ENCODE measurements at regions of chr15 and their contacts with region 1.

Region 1: DNA sequence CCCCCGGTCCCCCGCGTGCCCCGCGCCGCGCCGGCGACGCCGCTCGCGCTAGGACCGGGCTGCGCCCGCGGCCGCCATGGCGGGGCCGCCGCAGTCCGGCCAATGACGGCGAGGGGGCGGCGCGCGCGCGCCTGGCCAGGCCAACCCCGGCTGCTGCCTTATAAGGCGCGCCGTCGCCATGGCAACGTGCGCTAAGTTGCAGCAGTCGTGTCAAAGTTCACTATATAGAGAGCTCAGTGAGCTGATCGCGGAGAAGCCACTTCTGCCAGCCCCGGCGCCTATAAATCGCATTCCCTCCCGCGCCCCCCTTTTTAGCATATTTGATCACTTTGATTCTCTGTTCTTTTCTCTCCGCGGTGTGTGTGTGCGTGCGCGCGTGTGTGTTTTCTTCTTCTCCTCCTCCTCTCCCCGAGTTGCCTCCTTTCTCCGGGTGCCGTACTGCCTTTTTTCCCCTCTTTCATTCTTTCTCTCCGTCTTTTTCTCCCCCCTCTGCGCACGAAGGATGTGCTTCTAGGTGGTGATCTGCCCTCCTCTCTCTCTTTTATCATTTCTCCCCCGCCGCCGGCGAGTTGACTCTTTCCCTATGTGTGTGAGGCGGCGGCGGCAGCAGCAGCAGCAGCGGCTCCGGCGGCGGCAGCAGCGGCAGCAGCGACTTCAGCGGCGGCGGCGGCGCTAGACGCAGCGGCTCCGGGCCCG is at the start of gene NR2F2:
- DNase-seq: peak; percentile 99
- ATAC-seq: peak; percentile 78
- H3K4me3 ChIP-seq: peak within 1 kb of the TSS; percentile 84
- H3K27ac ChIP-seq: peak within 1 kb of the TSS; percentile 98
- H3K4me1 ChIP-seq: peaks cover 3% of the 10 kb centered on the region
- H3K27me3 ChIP-seq: no peaks in the 10 kb centered on the region
- CTCF ChIP-seq: no peak
- POLR2A ChIP-seq: peak; percentile 88
- RAD21 ChIP-seq: no peak; the same call in 1 of the 2 replicates
- total RNA-seq, gene NR2F2: 20.3 and 28.1 TPM in 2 replicates

Region 2: GRCh38 chr15:95025924-95026728 is 1304.5 kb before region 1 on chr15:
- CTCF ChIA-PET with region 1: no interaction called
- POLR2A ChIA-PET with region 1: no interaction called
- dilution Hi-C with region 1: no loop called
- in situ Hi-C with region 1: no loop called
- intact Hi-C with region 1: loop called (anchors 1 kb)
- DNase-seq: peak; percentile 61
- ATAC-seq: peak; percentile 93
- H3K4me3 ChIP-seq: no peak overlapping the region
- H3K27ac ChIP-seq: no peak overlapping the region
- H3K4me1 ChIP-seq: no peaks in the 10 kb centered on the region
- H3K27me3 ChIP-seq: peaks cover 2% of the 10 kb centered on the region; the same call in 1 of the 2 replicates
- CTCF ChIP-seq: peak; percentile 77
- POLR2A ChIP-seq: no peak
- RAD21 ChIP-seq: peak; percentile 81

Region 3: GRCh38 chr15:95291898-95292472 is 1038.6 kb before region 1 on chr15:
- CTCF ChIA-PET with region 1: no interaction called
- POLR2A ChIA-PET with region 1: interaction called, 3 read pairs
- dilution Hi-C with region 1: no loop called
- in situ Hi-C with region 1: loop called (anchors 10 kb)
- intact Hi-C with region 1: loop called (anchors 1 kb)
- DNase-seq: peak; percentile 56
- ATAC-seq: no peak
- H3K4me3 ChIP-seq: no peak overlapping the region
- H3K27ac ChIP-seq: no peak overlapping the region
- H3K4me1 ChIP-seq: peaks cover 15% of the 10 kb centered on the region
- H3K27me3 ChIP-seq: no peaks in the 10 kb centered on the region
- CTCF ChIP-seq: peak; percentile 59
- POLR2A ChIP-seq: no peak
- RAD21 ChIP-seq: peak; percentile 52

Region 4: DNA sequence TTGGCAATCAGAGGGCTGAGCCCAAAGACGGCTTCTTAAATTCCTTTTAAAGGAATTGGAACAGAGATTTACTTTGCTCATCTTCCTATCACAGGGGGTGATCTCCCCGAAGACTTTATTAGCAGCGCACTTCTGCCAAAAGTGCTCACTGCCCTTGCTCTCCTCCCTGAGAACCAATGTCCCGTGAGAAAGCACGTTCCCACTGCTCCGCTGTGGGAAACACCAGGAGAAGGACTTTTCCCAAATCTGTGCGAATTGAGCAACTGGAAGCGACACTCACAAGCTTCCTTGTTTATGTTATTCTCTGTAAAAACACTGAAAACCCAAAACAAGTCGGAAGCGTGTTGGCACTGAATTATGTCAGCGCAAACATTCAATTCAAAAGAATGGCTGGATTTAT is 670.9 kb before region 1 on chr15:
- CTCF ChIA-PET with region 1: no interaction called
- POLR2A ChIA-PET with region 1: no interaction called
- dilution Hi-C with region 1: no loop called
- in situ Hi-C with region 1: no loop called
- intact Hi-C with region 1: loop called (anchors 10 kb)
- DNase-seq: no peak
- ATAC-seq: no peak
- H3K4me3 ChIP-seq: no peak overlapping the region
- H3K27ac ChIP-seq: no peak overlapping the region
- H3K4me1 ChIP-seq: peaks cover 12% of the 10 kb centered on the region
- H3K27me3 ChIP-seq: no peaks in the 10 kb centered on the region
- CTCF ChIP-seq: no peak
- POLR2A ChIP-seq: no peak
- RAD21 ChIP-seq: no peak

Region 5: DNA sequence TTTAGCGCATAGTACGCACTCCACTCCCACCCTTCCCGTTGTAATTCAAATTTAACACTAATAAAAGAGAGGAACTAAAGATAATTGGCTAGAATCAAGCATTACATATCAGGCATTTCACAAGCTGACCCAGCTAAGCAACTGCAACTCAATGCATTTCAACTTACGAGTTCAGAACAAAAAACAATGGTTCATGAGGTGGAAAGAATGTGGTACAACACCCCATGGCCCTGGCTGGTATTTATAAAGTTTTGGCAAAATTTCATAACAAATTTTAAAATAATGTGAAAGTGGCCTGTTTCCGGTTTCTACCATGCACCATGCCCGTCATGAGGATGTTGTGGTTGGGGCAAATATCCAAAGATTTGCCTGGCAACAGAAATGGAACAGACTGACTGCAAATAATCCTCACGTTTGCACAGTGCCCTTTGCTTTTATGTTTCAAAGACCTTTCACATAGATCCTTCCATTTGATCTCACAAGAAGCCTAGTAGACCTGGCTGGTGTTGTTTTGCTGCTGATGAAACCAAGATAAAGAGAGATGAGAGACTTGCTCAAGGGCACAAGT is 455.4 kb before region 1 on chr15:
- CTCF ChIA-PET with region 1: no interaction called
- POLR2A ChIA-PET with region 1: no interaction called
- dilution Hi-C with region 1: no loop called
- in situ Hi-C with region 1: no loop called
- intact Hi-C with region 1: loop called (anchors 2 kb)
- DNase-seq: no peak
- ATAC-seq: no peak
- H3K4me3 ChIP-seq: no peak overlapping the region
- H3K27ac ChIP-seq: no peak overlapping the region
- H3K4me1 ChIP-seq: peaks cover 3% of the 10 kb centered on the region
- H3K27me3 ChIP-seq: no peaks in the 10 kb centered on the region
- CTCF ChIP-seq: no peak
- POLR2A ChIP-seq: no peak
- RAD21 ChIP-seq: no peak

Region 6: DNA sequence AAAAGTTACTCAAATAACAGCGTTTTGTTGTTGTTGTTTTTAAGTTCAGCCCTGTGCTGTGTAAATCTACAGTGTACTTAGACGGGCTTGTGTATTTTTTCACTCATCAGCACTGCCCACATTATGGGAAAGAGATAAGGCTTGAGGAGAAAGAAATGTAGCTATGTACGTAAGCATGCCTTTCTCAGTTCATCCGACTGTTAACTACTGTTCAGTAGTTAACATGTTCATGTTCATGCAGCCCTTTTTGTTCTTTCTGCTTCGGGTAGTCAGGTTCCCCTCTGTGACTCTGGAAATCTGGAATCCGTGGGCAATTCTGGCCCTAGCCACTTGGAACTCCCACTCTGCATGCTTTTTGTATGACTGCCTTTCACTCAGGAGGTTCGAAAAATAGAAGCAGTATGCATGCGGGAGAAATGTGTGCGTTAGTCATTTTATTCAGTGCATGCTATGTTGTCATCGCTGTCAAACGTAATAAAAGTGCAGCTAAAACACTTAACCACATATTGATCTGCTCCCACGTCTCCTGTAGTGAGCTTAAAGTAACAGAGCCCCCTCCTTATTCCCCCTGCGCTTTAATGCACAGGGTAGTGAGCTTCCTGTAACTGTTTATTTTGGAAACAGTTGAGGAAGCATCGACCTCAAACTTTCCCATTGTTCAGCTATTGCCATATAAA is 283.2 kb before region 1 on chr15:
- CTCF ChIA-PET with region 1: interaction called, 4 read pairs
- POLR2A ChIA-PET with region 1: no interaction called
- dilution Hi-C with region 1: no loop called
- in situ Hi-C with region 1: no loop called
- intact Hi-C with region 1: loop called (anchors 2 kb)
- DNase-seq: peak; percentile 98
- ATAC-seq: peak; percentile 88
- H3K4me3 ChIP-seq: peak overlapping the region; percentile 4; the same call in 1 of the 2 replicates
- H3K27ac ChIP-seq: peak overlapping the region; percentile 13; the same call in 1 of the 2 replicates
- H3K4me1 ChIP-seq: peaks cover 3% of the 10 kb centered on the region
- H3K27me3 ChIP-seq: no peaks in the 10 kb centered on the region
- CTCF ChIP-seq: no peak; the same call in 1 of the 2 replicates
- POLR2A ChIP-seq: peak; percentile 46; the same call in 1 of the 2 replicates
- RAD21 ChIP-seq: peak; percentile 20; the same call in 1 of the 2 replicates

Region 7: DNA sequence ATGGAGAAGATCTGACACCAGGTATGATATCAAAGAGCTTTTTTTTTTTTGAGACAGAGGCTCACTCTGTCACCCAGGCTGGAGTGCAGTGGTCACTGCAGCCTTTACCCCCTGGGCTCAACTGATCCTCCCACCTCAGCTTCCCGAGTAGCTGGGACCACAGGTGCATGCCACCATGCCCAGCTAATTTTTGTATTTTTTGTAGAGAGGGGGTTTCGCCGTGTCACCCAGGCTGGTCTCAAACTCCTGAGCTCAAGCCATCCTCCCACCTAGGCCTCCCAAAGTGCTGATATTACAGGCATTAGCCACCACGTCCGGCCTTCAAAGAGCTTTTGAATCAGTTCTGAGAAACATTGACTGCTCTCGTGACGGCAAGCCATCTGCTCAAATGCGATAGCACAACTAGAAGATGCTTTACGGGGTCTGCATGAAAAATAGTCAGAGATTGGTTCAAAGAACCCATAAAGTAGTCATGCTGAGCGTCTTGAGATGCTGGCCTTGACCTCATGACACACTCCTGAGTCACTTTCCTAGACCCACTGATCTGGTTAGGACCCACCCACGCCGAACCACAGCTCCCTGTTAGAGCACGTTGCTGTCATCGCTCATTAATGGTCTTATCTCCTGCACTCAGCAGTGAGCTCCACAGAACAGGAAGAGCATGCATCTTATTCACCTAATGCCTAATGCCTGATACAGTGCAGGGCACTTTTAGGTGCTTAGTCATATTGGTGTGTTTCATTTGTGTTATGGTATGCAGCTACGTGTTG is 57.1 kb before region 1 on chr15:
- CTCF ChIA-PET with region 1: interaction called, 5 read pairs
- POLR2A ChIA-PET with region 1: interaction called, 3 read pairs
- dilution Hi-C with region 1: no loop called
- in situ Hi-C with region 1: no loop called
- intact Hi-C with region 1: loop called (anchors 2 kb)
- DNase-seq: peak; percentile 100
- ATAC-seq: peak; percentile 88
- H3K4me3 ChIP-seq: no peak overlapping the region
- H3K27ac ChIP-seq: peak overlapping the region; percentile 20
- H3K4me1 ChIP-seq: peaks cover 19% of the 10 kb centered on the region
- H3K27me3 ChIP-seq: no peaks in the 10 kb centered on the region
- CTCF ChIP-seq: no peak
- POLR2A ChIP-seq: peak; percentile 24; the same call in 1 of the 2 replicates
- RAD21 ChIP-seq: 0 out of 2 replicates have a peak, but pooled peaks have one; percentile 3

Region 8: GRCh38 chr15:96416934-96417759 is 86.5 kb after region 1 on chr15:
- CTCF ChIA-PET with region 1: no interaction called
- POLR2A ChIA-PET with region 1: no interaction called
- dilution Hi-C with region 1: no loop called
- in situ Hi-C with region 1: no loop called
- intact Hi-C with region 1: no loop called
- DNase-seq: peak; percentile 4
- ATAC-seq: peak; percentile 44
- H3K4me3 ChIP-seq: peak overlapping the region; percentile 30
- H3K27ac ChIP-seq: no peak overlapping the region
- H3K4me1 ChIP-seq: peaks cover 2% of the 10 kb centered on the region; the same call in 1 of the 2 replicates
- H3K27me3 ChIP-seq: peaks cover 86% of the 10 kb centered on the region
- CTCF ChIP-seq: no peak
- POLR2A ChIP-seq: no peak
- RAD21 ChIP-seq: no peak

Region 9: DNA sequence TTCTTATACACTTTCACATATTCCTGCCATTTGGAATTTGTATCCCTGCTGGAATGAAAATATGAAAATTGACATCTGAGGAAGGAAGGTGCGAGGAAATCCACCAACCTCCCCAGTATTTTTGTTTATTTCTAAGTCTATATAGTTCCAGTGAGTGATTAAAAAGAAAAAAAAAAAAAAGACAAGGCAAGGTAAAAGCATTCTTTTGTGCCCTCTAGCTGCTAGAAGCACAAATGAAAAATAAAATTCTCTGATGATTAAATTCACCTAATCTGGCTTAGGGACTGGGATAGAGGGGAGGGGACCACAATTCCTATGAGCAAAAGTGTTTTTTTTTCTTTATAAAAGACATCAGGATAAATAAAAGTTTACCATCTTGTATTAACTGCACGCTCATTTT is 370.8 kb after region 1 on chr15:
- CTCF ChIA-PET with region 1: no interaction called
- POLR2A ChIA-PET with region 1: no interaction called
- dilution Hi-C with region 1: no loop called
- in situ Hi-C with region 1: no loop called
- intact Hi-C with region 1: no loop called
- DNase-seq: no peak
- ATAC-seq: no peak
- H3K4me3 ChIP-seq: no peak overlapping the region
- H3K27ac ChIP-seq: no peak overlapping the region
- H3K4me1 ChIP-seq: no peaks in the 10 kb centered on the region
- H3K27me3 ChIP-seq: no peaks in the 10 kb centered on the region
- CTCF ChIP-seq: no peak
- POLR2A ChIP-seq: no peak
- RAD21 ChIP-seq: no peak

Measured in IMR-90 (cell line).